A673 (cell line): ENCODE measurements at regions of chr4 and their contacts with region 1.

Region 1: GRCh38 chr4:104860238-104861123 is 286.2 kb upstream of the TET2 start:
- DNase-seq: peak; percentile 85
- H3K4me3 ChIP-seq: no peak overlapping the region
- H3K27ac ChIP-seq: no peak overlapping the region
- H3K4me1 ChIP-seq: no peaks in the 10 kb centered on the region
- H3K27me3 ChIP-seq: peaks cover 6% of the 10 kb centered on the region
- CTCF ChIP-seq: peak; percentile 88

Region 2: DNA sequence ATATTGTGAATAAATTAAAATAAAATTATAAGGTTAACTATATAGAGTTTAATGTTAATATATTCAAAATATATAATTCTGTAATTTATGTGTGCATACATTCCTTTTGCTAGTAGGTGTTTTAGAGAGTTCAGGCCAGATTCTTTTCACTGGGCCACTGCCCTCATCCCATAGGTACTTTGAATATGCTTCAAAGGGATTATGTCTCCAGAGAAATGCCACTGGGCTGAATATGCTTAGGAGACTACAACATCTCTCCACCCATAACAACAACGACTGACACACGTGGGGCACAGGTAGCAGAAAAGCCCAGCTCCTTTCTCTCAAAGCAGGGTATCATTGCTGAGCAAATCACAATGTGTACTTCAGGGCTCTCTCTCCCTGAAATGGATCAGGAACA is 849.8 kb before region 1 on chr4:
- CTCF ChIA-PET with region 1: no interaction called
- POLR2A ChIA-PET with region 1: no interaction called
- intact Hi-C with region 1: loop called (anchors 5 kb)
- DNase-seq: no peak
- H3K4me3 ChIP-seq: no peak overlapping the region
- H3K27ac ChIP-seq: no peak overlapping the region
- H3K4me1 ChIP-seq: no peaks in the 10 kb centered on the region
- H3K27me3 ChIP-seq: no peaks in the 10 kb centered on the region
- CTCF ChIP-seq: no peak

Region 3: DNA sequence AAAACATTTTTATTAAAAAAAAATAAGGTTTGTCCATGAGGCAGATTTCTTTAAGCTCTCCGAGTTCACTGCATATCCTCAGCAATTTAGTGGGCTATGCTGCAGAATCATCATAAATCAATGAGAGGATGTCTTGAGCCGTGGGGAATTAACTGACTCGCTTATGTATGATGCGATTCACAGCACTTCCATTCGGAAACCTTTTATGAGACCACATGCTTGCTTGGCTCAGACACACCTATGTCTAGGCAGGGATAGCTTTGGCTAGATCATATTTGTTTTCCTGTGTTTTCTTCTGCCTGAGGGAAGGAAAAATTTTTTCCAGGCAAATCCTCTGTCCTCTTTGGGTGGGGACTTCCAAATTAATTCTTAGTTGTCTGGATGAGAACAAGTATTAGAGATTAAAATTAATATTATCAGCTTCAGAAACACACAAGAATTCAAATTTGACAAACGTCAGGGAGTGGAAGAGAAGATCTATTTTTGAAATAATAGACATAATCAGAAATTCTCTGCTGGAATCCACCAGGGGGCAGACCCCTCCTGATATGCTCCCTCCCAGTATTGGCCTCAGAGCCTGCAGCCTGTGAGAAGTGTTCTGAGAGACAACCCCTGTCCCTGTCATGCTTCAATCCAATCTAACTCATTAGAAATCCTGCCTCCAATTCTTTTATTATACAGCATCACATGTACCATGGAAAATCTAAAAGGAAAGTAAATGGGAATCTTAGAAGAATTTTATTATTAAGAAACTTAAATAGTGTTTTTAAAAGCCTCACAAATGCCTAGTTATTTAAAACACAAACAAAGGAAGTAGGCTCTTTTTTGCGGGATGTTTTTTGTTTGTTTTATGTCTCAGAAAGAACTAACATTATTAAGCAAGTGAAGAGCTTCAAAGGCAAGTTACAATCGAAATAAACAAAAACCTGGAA is 795.6 kb before region 1 on chr4:
- CTCF ChIA-PET with region 1: no interaction called
- POLR2A ChIA-PET with region 1: no interaction called
- intact Hi-C with region 1: loop called (anchors 2 kb)
- DNase-seq: peak; percentile 64
- H3K4me3 ChIP-seq: no peak overlapping the region
- H3K27ac ChIP-seq: no peak overlapping the region
- H3K4me1 ChIP-seq: no peaks in the 10 kb centered on the region
- H3K27me3 ChIP-seq: no peaks in the 10 kb centered on the region
- CTCF ChIP-seq: peak; percentile 68

Region 4: GRCh38 chr4:104930298-104930697 is 69.8 kb after region 1 on chr4:
- CTCF ChIA-PET with region 1: no interaction called
- POLR2A ChIA-PET with region 1: no interaction called
- intact Hi-C with region 1: no loop called
- DNase-seq: no peak
- H3K4me3 ChIP-seq: no peak overlapping the region
- H3K27ac ChIP-seq: no peak overlapping the region
- H3K4me1 ChIP-seq: no peaks in the 10 kb centered on the region
- H3K27me3 ChIP-seq: no peaks in the 10 kb centered on the region
- CTCF ChIP-seq: no peak